ENCODE measurements at regions of chr2 and their contacts with region 1.

Region 1: GRCh38 chr2:219253753-219254590 is at the start of gene TUBA4A:
- DNase-seq: peak; percentile 97
- H3K4me3 Mint-ChIP-seq: peak within 1 kb of the TSS; percentile 80
- H3K27ac Mint-ChIP-seq: peak within 1 kb of the TSS; percentile 91
- H3K4me1 Mint-ChIP-seq: peaks cover 47% of the 10 kb centered on the region
- H3K27me3 Mint-ChIP-seq: no peaks in the 10 kb centered on the region
- total RNA-seq, gene TUBA4A: 235 and 240 TPM in 2 replicates

Region 2: DNA sequence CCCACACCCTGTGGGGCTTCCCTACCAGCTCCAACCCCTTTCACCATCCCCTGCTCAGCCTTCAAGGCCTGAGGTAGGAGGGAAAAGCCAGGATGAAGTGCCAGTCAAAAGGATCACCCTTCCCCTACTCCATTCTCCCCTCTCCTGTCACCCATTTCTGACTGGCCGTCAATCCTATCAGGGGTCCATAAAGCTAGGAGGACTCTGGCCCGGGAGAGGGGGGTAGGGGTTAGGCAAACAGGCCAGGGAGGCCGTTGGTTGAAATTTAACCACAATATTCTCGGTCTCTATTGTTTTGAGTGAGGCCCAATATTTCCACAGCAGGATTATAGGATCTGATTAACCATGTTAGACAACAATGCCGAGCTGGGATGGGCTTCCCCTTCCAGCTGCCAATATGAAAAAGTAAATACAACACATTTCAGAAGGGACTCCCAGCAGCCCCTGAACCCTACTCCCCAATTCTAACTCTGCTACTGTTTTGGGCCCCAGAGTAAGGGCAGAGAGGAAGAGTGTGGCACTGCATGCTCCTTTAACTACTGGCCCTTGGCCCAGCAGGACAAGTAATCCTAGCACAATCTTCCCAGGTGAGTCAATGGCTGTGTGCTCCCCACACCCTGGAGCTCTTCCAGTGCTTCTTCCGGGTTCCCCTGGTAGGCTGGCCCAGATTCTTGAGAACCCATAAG is 182.7 kb before region 1 on chr2:
- intact Hi-C with region 1: no loop called
- DNase-seq: no peak
- H3K4me3 Mint-ChIP-seq: no peak overlapping the region
- H3K27ac Mint-ChIP-seq: no peak overlapping the region
- H3K4me1 Mint-ChIP-seq: no peaks in the 10 kb centered on the region
- H3K27me3 Mint-ChIP-seq: peaks cover 6% of the 10 kb centered on the region

Region 3: DNA sequence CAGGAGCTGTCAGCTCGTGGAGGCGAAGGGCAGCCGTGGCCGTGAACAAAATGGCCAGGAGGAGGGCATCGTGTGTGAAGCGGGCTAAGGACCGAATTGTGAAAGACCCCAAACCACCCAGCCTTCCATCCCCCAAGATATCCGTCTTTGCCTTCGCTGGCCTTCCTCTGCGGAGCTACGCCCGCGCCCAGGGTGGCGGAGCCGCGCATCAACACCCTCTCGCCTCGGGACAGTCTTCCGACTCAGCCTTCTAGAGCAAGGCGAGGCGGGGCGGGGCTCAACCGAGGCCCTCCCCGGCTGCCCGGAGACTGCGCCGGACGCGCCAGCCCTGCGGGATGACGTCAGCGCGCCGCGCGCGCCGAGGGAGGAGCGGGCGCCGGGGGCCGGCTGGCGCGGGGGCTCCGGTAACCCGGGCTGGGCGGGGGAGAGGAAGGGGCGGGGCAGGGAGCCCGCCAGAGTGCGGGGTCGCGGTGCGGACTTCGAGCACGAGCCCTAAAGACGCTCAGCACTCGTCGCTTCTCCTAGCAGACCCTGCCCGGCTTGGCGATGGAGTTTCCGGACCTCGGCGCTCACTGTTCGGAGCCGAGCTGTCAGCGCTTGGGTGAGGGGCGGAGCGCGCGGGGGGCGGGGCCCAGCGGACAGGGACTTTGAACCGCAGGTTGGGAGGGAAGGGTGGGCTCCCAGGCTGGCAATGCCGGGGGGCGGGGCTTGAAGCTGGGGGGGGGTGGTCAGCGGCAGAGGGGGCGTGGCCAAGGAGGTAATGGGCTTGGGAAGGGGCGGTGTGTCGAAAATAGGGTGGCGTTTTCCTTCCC is 47.3 kb before region 1 on chr2 and contains the start of gene ZFAND2B:
- intact Hi-C with region 1: loop called (anchors 1 kb)
- DNase-seq: peak; percentile 99
- H3K4me3 Mint-ChIP-seq: peak within 1 kb of the TSS; percentile 83
- H3K27ac Mint-ChIP-seq: peak within 1 kb of the TSS; percentile 92
- H3K4me1 Mint-ChIP-seq: peaks cover 35% of the 10 kb centered on the region
- H3K27me3 Mint-ChIP-seq: no peaks in the 10 kb centered on the region
- total RNA-seq, gene ZFAND2B: 36.7 and 37.4 TPM in 2 replicates

Region 4: DNA sequence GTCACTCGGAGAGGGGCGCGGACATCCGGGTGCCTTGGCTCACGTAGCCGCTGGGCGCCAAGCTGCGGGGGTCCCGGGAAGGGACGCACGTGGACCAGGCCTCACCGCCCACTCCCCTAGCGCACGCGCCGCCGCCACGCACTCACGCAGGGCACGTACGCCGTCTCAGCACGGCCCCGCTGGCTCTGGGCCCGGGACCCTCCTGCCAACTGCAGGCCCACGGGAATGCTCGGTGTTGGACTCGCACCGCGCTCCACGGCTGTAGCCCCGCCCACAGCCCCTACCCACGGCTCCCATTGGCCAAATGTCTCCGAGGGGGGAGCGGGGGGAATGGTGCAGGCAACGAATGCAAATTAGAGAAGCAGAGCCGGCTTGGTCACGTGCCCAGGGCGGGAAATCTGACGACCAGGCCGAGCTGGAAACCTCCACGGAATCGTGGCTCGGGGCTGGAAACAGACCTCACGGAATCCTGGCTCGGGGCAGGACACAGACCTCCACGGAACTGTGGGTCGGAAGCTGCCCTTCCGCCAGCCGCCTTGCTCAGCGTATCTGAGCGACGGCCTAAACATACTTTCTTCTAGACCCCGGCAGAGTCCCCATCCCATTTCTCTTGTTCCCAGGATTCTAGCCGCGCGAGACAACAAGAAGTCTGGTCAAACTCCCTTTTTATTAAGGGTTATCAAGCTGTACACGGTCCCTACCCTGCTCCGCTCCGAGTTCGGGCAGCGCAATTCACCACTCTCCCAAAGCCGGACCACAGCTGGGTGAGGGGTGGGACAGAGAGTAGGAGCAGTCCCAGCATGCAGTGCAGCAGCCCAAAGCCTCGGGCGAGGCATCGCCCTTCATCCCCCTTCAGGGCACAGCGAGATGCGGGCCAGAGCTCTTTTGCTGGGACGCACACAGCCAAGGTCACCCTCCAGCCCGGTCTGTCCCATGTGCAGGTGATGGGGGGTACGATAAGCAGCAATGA is 35.0 kb before region 1 on chr2 and contains the start of gene ABCB6:
- intact Hi-C with region 1: loop called (anchors 1 kb)
- DNase-seq: peak; percentile 96
- H3K4me3 Mint-ChIP-seq: peak within 1 kb of the TSS; percentile 91
- H3K27ac Mint-ChIP-seq: peak within 1 kb of the TSS; percentile 81
- H3K4me1 Mint-ChIP-seq: peaks cover 24% of the 10 kb centered on the region
- H3K27me3 Mint-ChIP-seq: no peaks in the 10 kb centered on the region
- total RNA-seq, gene ABCB6: 28.8 TPM in 2 replicates

Region 5: GRCh38 chr2:219229305-219230058 is 24.5 kb before region 1 on chr2 and contains the starts of genes ANKZF1 and ATG9A:
- intact Hi-C with region 1: loop called (anchors 1 kb)
- DNase-seq: peak; percentile 100
- H3K4me3 Mint-ChIP-seq: peak within 1 kb of the TSS; percentile 92
- H3K27ac Mint-ChIP-seq: peak within 1 kb of the TSS; percentile 98
- H3K4me1 Mint-ChIP-seq: peaks cover 43% of the 10 kb centered on the region
- H3K27me3 Mint-ChIP-seq: no peaks in the 10 kb centered on the region
- total RNA-seq, gene ANKZF1: 144 and 149 TPM in 2 replicates
- total RNA-seq, gene ATG9A: 61.6 and 67.2 TPM in 2 replicates

Region 6: DNA sequence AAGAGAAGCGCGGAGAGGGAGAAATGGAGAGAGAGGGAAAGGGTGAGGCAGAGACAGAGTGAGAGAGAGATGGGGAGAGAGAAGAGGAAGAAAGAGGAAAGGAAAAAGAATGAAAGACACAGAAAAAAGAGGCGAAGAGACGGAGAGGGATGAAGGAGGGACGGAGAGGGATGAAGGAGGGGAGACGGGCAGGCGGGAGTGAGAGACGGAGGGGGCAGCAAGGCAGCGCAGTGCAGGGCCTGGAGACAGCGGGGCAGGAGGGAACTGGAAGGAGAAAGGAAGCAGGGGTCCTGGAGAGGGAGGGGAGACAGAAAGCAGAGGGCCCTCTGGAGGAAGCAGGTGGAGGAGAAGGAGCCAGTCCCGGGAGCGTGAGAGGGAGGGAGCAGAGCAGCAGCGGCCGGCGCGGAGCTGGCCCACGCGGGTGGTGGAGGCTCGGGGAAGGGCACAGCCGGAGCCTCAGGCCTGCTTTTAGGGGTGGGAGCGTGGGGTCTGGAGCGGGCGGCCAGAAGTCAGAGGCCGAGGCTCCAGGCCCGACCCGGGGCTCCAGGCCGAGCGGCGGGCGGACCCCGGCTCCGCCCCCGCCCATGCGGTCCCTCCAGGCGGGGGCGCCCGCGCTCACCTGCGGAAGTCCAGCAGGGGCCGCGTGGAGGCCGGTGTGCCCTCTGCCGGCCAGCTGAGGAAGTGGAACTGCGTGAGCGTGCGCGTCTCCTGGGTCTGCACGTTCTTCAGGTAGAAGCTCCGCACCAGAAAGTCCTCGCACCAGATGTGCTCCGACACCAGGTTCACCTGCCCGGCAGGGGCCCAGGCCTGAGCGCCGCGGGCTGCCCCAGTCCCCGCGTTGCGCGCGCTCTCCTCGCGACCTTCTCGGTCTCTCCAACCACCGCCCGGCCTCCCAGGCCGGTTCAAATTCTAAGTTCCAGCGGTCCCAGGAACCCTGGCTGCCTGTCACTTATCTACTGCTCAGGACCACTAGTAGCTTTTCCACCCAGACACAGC is 40.7 kb after region 1 on chr2:
- intact Hi-C with region 1: loop called (anchors 1 kb)
- DNase-seq: peak; percentile 97
- H3K4me3 Mint-ChIP-seq: peak overlapping the region; percentile 84
- H3K27ac Mint-ChIP-seq: peak overlapping the region; percentile 97
- H3K4me1 Mint-ChIP-seq: peaks cover 17% of the 10 kb centered on the region
- H3K27me3 Mint-ChIP-seq: peaks cover 6% of the 10 kb centered on the region

Region 7: GRCh38 chr2:219368690-219369195 is 114.8 kb after region 1 on chr2:
- intact Hi-C with region 1: no loop called
- DNase-seq: no peak
- H3K4me3 Mint-ChIP-seq: no peak overlapping the region
- H3K27ac Mint-ChIP-seq: no peak overlapping the region
- H3K4me1 Mint-ChIP-seq: no peaks in the 10 kb centered on the region
- H3K27me3 Mint-ChIP-seq: no peaks in the 10 kb centered on the region

Region 8: GRCh38 chr2:219543601-219544358 is 289.8 kb after region 1 on chr2 and contains the starts of genes CHPF and TMEM198:
- intact Hi-C with region 1: loop called (anchors 1 kb)
- DNase-seq: peak; percentile 99
- H3K4me3 Mint-ChIP-seq: peak within 1 kb of the TSS; percentile 89
- H3K27ac Mint-ChIP-seq: peak within 1 kb of the TSS; percentile 75
- H3K4me1 Mint-ChIP-seq: peaks cover 17% of the 10 kb centered on the region
- H3K27me3 Mint-ChIP-seq: peaks cover 18% of the 10 kb centered on the region
- total RNA-seq, gene CHPF: 37.8 and 38.3 TPM in 2 replicates
- total RNA-seq, gene TMEM198: 3.1 and 3.4 TPM in 2 replicates